Endothelial cell of umbilical vein (primary cell): ENCODE measurements at regions of chr19 and their contacts with region 1.

Region 1: DNA sequence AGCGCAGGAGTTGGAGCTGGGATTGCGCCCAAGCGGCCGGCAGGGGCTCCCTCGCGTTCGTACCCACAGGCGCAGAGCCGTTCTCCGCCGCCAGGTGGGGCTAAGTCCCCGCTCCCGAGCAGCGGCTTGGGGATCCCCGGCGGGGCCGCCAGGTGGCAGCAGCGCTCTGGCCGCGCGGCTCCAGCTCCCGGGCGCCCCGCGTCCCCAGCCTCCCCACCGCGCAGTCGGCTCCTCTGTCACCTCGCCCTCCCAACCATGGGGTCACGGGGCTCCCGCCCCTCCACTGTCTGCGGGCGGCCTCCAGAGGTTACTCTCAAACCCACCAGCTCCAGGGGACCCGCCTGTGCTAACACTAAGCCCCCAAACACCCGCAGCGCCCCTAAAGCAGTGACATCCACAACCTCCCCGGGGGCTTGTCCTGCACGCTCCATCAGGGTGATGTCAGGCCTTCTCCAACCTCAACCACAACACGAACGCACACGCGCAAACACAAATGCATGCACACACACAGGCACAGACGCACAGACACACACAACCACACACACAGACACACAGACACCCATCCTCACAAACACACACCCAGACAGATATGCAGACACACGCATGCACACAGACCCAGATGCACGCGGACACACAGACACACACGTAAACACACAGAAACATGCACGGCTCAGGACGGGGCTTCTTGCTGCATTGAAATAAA is 18.4 kb upstream of the KCTD15 start:
- DNase-seq: peak; percentile 69
- H3K4me3 ChIP-seq: no peak overlapping the region
- H3K27ac ChIP-seq: no peak overlapping the region
- H3K4me1 ChIP-seq: peaks cover 6% of the 10 kb centered on the region
- H3K27me3 ChIP-seq: peaks cover 0 to 4% of the 10 kb centered on the region in 2 experiments
- CTCF ChIP-seq: peak; percentile 100
- POLR2A ChIP-seq: no peak

Region 2: GRCh38 chr19:33430674-33431277 is 347.5 kb before region 1 on chr19:
- CTCF ChIA-PET with region 1: interaction called, 23 read pairs
- POLR2A ChIA-PET with region 1: no interaction called
- dilution Hi-C with region 1: no loop called
- intact Hi-C with region 1: no loop called
- DNase-seq: peak; percentile 65
- H3K4me3 ChIP-seq: no peak overlapping the region
- H3K27ac ChIP-seq: no peak overlapping the region
- H3K4me1 ChIP-seq: peaks cover 6% of the 10 kb centered on the region
- H3K27me3 ChIP-seq: no peaks in the 10 kb centered on the region
- CTCF ChIP-seq: peak; percentile 73 to 91
- POLR2A ChIP-seq: no peak

Region 3: DNA sequence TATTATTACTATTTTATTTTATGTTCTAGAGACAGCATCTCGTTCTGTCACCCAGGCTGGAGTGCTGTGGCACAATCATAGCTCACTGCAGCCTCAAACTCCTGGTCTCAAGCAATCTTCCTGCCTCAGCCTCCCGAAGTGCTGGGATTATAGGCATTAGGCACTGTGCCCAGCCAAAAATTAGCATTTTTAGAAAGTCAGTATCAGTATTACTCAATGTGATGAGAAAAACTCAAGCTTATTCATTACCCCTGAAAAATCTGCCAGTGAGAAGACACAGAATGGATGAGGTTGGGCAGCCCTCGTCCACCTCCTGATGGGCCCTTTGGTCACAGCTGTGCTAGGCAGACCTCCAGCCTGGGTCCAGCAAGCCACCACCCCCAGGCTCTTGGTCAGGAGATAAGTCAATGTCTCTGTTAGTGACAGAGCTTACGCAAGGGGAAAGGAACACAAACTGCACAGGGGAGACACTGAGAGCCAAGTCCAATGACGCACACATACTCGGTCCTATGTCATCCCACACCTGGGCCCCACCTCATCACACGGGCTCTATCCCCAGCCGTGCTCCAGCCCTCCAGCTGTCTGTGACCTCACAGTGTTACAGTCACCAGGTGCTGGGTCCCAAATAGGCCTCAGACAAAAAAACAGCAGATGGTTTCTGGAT is 276.4 kb before region 1 on chr19:
- CTCF ChIA-PET with region 1: no interaction called
- POLR2A ChIA-PET with region 1: no interaction called
- dilution Hi-C with region 1: no loop called
- intact Hi-C with region 1: no loop called
- DNase-seq: no peak
- H3K4me3 ChIP-seq: no peak overlapping the region
- H3K27ac ChIP-seq: no peak overlapping the region
- H3K4me1 ChIP-seq: no peaks in the 10 kb centered on the region
- H3K27me3 ChIP-seq: no peaks in the 10 kb centered on the region
- CTCF ChIP-seq: no peak
- POLR2A ChIP-seq: no peak

Region 4: GRCh38 chr19:33720691-33721682 is 57.3 kb before region 1 on chr19:
- CTCF ChIA-PET with region 1: no interaction called
- POLR2A ChIA-PET with region 1: no interaction called
- dilution Hi-C with region 1: no loop called
- intact Hi-C with region 1: no loop called
- DNase-seq: no peak
- H3K4me3 ChIP-seq: no peak overlapping the region
- H3K27ac ChIP-seq: no peak overlapping the region
- H3K4me1 ChIP-seq: no peaks in the 10 kb centered on the region
- H3K27me3 ChIP-seq: no peaks in the 10 kb centered on the region
- CTCF ChIP-seq: no peak
- POLR2A ChIP-seq: no peak

Region 5: DNA sequence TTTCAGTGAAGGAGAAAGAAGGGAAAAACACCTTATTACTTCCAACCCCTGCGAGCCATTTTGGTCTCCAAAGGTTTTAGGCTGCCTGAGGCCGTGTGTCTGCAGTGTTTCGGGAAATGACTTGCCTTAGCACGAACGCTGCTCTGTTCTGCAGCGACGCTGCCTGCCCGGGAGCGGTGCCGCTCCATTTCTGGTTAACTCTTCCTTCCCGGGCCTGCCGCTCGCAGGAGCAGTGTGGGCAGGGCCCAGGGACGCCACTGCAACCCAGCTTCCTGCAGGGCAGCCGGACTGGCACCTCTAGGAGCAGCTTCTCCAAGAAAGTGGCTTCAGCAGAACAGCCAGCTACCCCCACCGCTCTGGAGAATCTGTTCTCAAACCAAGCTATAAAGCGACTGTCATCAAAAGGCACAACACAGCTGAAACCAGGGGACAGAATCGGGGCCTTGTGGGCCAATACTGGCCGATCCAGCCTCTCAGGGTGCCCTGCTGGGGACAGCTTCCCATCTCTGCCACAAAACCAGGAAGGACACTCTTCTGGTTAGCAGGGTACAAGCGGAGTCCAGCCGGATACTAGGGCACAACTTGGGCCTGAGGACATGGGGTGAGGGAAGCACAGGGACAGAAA is 90.7 kb after region 1 on chr19:
- CTCF ChIA-PET with region 1: interaction called, 20 read pairs
- POLR2A ChIA-PET with region 1: no interaction called
- dilution Hi-C with region 1: no loop called
- intact Hi-C with region 1: no loop called
- DNase-seq: peak; percentile 43
- H3K4me3 ChIP-seq: peak overlapping the region in 1 of 3 experiments; percentile 14
- H3K27ac ChIP-seq: no peak overlapping the region
- H3K4me1 ChIP-seq: peaks cover 7% of the 10 kb centered on the region
- H3K27me3 ChIP-seq: peaks cover 2 to 3% of the 10 kb centered on the region in 2 experiments
- CTCF ChIP-seq: no peak
- POLR2A ChIP-seq: no peak

Region 6: GRCh38 chr19:33947265-33947964 is 169.2 kb after region 1 on chr19:
- CTCF ChIA-PET with region 1: interaction called, 19 read pairs
- POLR2A ChIA-PET with region 1: no interaction called
- dilution Hi-C with region 1: no loop called
- intact Hi-C with region 1: no loop called
- DNase-seq: no peak
- H3K4me3 ChIP-seq: no peak overlapping the region
- H3K27ac ChIP-seq: no peak overlapping the region
- H3K4me1 ChIP-seq: no peaks in the 10 kb centered on the region
- H3K27me3 ChIP-seq: no peaks in the 10 kb centered on the region
- CTCF ChIP-seq: peak; percentile 4 to 12
- POLR2A ChIP-seq: no peak

Region 7: GRCh38 chr19:34041925-34042521 is 263.8 kb after region 1 on chr19:
- CTCF ChIA-PET with region 1: interaction called, 26 read pairs
- POLR2A ChIA-PET with region 1: no interaction called
- dilution Hi-C with region 1: no loop called
- intact Hi-C with region 1: loop called (anchors 1 kb)
- DNase-seq: peak; percentile 41
- H3K4me3 ChIP-seq: no peak overlapping the region
- H3K27ac ChIP-seq: no peak overlapping the region
- H3K4me1 ChIP-seq: no peaks in the 10 kb centered on the region
- H3K27me3 ChIP-seq: no peaks in the 10 kb centered on the region
- CTCF ChIP-seq: peak; percentile 96
- POLR2A ChIP-seq: no peak

Region 8: GRCh38 chr19:34104096-34104495 is 325.9 kb after region 1 on chr19:
- CTCF ChIA-PET with region 1: interaction called, 20 read pairs
- POLR2A ChIA-PET with region 1: no interaction called
- dilution Hi-C with region 1: no loop called
- intact Hi-C with region 1: no loop called
- DNase-seq: no peak
- H3K4me3 ChIP-seq: no peak overlapping the region
- H3K27ac ChIP-seq: no peak overlapping the region
- H3K4me1 ChIP-seq: no peaks in the 10 kb centered on the region
- H3K27me3 ChIP-seq: peaks cover 2 to 4% of the 10 kb centered on the region in 2 experiments
- CTCF ChIP-seq: no peak
- POLR2A ChIP-seq: no peak